PC-9 (cell line): ENCODE measurements at regions of chr19 and their contacts with region 1.

Region 1: GRCh38 chr19:46232029-46232428 is 2.5 kb downstream of the IGFL1 start:
- DNase-seq: peak; percentile 96 to 99
- H3K4me3 ChIP-seq: no peak overlapping the region; the same call in 1 of the 2 replicates
- H3K27ac ChIP-seq: peak overlapping the region; percentile 87
- H3K4me1 ChIP-seq: peaks cover 55% of the 10 kb centered on the region
- H3K27me3 ChIP-seq: no peaks in the 10 kb centered on the region
- CTCF ChIP-seq: no peak

Region 2: GRCh38 chr19:46192992-46193650 is 38.9 kb before region 1 on chr19:
- CTCF ChIA-PET with region 1: no interaction called
- POLR2A ChIA-PET with region 1: no interaction called
- intact Hi-C with region 1: loop called (anchors 5 kb)
- DNase-seq: peak; percentile 74 to 94
- H3K4me3 ChIP-seq: no peak overlapping the region; the same call in 1 of the 2 replicates
- H3K27ac ChIP-seq: peak overlapping the region; percentile 82
- H3K4me1 ChIP-seq: peaks cover 63% of the 10 kb centered on the region
- H3K27me3 ChIP-seq: no peaks in the 10 kb centered on the region
- CTCF ChIP-seq: no peak

Region 3: GRCh38 chr19:46201413-46202310 is 30.4 kb before region 1 on chr19:
- CTCF ChIA-PET with region 1: interaction called, 3 read pairs
- POLR2A ChIA-PET with region 1: interaction called, 7 read pairs
- intact Hi-C with region 1: loop called (anchors 2 kb)
- DNase-seq: peak; percentile 78 to 90
- H3K4me3 ChIP-seq: peak overlapping the region; percentile 65
- H3K27ac ChIP-seq: peak overlapping the region; percentile 97
- H3K4me1 ChIP-seq: peaks cover 85% of the 10 kb centered on the region
- H3K27me3 ChIP-seq: no peaks in the 10 kb centered on the region
- CTCF ChIP-seq: no peak

Region 4: GRCh38 chr19:46271481-46272197 is 39.6 kb after region 1 on chr19:
- CTCF ChIA-PET with region 1: no interaction called
- POLR2A ChIA-PET with region 1: interaction called, 13 read pairs
- intact Hi-C with region 1: no loop called
- DNase-seq: peak; percentile 78 to 100
- H3K4me3 ChIP-seq: peak overlapping the region; percentile 19; the same call in 1 of the 2 replicates
- H3K27ac ChIP-seq: peak overlapping the region; percentile 87
- H3K4me1 ChIP-seq: peaks cover 29% of the 10 kb centered on the region
- H3K27me3 ChIP-seq: no peaks in the 10 kb centered on the region
- CTCF ChIP-seq: no peak

Region 5: DNA sequence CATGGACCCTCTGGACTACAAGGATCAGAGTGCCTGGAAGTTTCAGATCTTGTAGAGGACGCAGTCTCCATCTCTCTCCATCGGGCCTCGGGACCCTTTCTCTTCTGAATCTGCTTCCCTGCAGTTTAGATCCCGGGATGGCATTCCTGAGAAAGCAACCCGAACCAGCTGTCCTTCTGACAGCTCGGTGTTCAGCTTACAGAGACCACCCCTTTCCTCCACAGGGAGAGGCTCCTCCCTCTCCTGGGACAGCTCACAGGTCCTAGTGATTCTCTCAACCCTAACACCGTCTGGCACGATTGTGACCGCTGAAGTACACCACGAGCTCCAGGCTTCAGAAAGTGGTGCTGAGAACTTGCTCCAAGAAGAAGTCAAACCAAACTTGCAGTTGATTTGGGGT is 1607.9 kb after region 1 on chr19:
- CTCF ChIA-PET with region 1: no interaction called
- POLR2A ChIA-PET with region 1: no interaction called
- intact Hi-C with region 1: no loop called
- DNase-seq: no peak
- H3K4me3 ChIP-seq: no peak overlapping the region
- H3K27ac ChIP-seq: no peak overlapping the region
- H3K4me1 ChIP-seq: no peaks in the 10 kb centered on the region
- H3K27me3 ChIP-seq: peaks cover 49% of the 10 kb centered on the region
- CTCF ChIP-seq: no peak